Endothelial cell of umbilical vein (primary cell): ENCODE measurements at regions of chr7 and their contacts with region 1.

Region 1: DNA sequence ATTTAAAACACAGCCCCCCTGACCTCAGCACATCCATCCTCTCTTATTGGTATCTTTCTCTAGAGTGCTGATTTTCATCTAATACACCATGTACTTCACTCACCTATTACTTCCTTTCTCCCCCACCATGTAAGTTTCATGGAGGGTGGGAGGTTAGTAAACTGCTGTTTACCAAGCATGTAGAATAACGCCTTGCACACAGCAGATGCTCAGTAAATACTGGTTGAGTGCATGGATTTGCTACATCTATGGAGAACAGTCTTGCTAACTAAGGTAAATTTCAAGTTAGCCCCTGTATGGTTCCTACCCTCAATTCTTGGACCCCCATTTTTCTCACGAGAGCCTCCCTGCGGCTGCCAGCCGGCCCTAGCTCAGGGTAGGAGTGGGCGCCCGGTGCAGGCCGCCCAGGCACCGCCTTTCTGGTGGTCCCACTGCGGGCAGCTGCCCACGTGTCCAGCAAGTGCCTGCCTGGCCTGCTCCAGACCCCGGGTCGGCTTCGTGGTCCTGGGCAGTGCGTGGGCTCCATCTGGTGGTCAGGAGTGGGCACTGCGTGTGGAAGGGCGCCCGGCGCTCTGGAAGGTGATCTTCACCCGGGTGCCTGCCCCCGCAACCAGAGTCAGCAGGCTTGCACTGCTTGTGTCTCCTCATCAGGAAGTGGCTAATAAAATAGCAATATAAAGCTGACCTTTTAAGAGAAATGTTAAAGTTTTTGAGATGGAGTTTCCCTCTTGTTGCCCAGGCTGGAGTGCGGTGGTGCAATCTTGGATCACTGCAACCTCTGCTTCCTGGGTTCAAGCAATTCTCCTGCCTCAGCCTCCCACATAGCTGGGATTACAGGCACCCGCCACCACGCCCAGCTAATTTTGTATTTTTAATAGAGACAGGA is 63.4 kb upstream of the DNAJB6 start:
- DNase-seq: peak; percentile 76
- H3K4me3 ChIP-seq: no peak overlapping the region
- H3K27ac ChIP-seq: no peak overlapping the region
- H3K4me1 ChIP-seq: peaks cover 14% of the 10 kb centered on the region
- H3K27me3 ChIP-seq: no peaks in the 10 kb centered on the region
- CTCF ChIP-seq: peak; percentile 95 to 99
- POLR2A ChIP-seq: no peak

Region 2: GRCh38 chr7:155796381-155797261 is 1476.8 kb before region 1 on chr7:
- CTCF ChIA-PET with region 1: no interaction called
- POLR2A ChIA-PET with region 1: no interaction called
- dilution Hi-C with region 1: no loop called
- intact Hi-C with region 1: loop called (anchors 5 kb)
- DNase-seq: no peak
- H3K4me3 ChIP-seq: no peak overlapping the region
- H3K27ac ChIP-seq: no peak overlapping the region
- H3K4me1 ChIP-seq: no peaks in the 10 kb centered on the region
- H3K27me3 ChIP-seq: peaks cover 6 to 11% of the 10 kb centered on the region in 2 experiments
- CTCF ChIP-seq: peak; percentile 63 to 97
- POLR2A ChIP-seq: no peak

Region 3: DNA sequence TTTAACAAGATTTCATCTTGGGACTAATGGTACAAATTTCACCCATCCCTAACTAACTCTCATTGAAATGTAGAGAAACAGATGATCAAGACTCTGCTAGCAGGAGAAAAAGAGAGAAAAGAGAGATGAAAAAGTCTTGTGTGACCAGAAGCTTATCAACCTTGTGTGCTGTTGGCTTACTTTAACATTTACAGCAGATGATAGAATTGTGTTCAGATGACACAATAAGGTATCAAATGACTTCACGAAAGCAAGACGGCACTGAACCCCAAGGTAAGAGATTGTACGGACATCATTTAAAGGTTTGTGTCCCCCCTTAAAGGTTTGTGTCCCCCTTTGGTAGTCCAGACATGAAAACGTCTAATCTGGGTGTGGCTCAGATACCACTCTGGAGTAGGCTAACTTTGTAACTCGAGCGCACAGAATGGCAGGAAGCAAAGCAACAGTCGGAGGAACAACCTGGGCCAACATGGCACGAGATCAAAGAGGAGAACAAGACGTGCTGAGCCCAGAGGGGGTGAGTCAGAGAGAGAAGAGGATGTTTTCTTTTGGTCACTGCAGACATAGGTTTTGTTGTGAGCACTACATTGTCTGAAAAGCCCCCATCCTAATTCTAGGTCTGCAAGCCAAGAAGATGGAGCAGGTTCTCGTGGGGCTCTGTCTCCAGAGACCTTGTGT is 370.1 kb before region 1 on chr7:
- CTCF ChIA-PET with region 1: no interaction called
- POLR2A ChIA-PET with region 1: no interaction called
- dilution Hi-C with region 1: no loop called
- intact Hi-C with region 1: loop called (anchors 2 kb)
- DNase-seq: peak; percentile 81
- H3K4me3 ChIP-seq: no peak overlapping the region
- H3K27ac ChIP-seq: peak overlapping the region; percentile 80
- H3K4me1 ChIP-seq: peaks cover 14% of the 10 kb centered on the region
- H3K27me3 ChIP-seq: no peaks in the 10 kb centered on the region
- CTCF ChIP-seq: no peak
- POLR2A ChIP-seq: peak; percentile 34

Region 4: DNA sequence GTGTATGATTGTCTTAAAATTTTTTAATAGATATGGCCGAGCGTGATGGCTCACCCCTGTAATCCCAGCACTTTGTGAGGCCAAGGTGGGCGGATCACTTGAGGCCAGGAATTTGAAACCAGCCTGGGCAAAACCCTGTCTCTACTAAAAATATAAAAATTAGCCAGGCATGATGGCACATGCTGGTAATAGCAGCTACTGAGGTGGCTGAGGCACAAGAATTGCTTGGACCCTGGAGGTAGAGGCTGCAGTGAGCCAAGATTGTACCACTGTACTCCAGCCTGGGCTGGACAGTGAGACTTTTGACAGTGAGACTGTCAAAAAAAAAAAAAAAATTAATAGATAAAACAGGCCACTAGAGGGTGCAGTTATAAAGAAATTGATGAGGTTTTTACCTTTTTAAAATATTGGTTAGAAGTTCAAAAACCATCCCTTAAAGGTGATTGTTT is 303.5 kb before region 1 on chr7:
- CTCF ChIA-PET with region 1: interaction called, 5 read pairs
- POLR2A ChIA-PET with region 1: no interaction called
- dilution Hi-C with region 1: no loop called
- intact Hi-C with region 1: loop called (anchors 1 kb)
- DNase-seq: peak; percentile 15
- H3K4me3 ChIP-seq: no peak overlapping the region
- H3K27ac ChIP-seq: no peak overlapping the region
- H3K4me1 ChIP-seq: no peaks in the 10 kb centered on the region
- H3K27me3 ChIP-seq: no peaks in the 10 kb centered on the region
- CTCF ChIP-seq: peak; percentile 20 to 22
- POLR2A ChIP-seq: no peak

Region 5: GRCh38 chr7:157228864-157229422 is 44.5 kb before region 1 on chr7:
- CTCF ChIA-PET with region 1: interaction called, 4 read pairs
- POLR2A ChIA-PET with region 1: no interaction called
- dilution Hi-C with region 1: no loop called
- intact Hi-C with region 1: loop called (anchors 1 kb)
- DNase-seq: peak; percentile 36
- H3K4me3 ChIP-seq: no peak overlapping the region
- H3K27ac ChIP-seq: no peak overlapping the region
- H3K4me1 ChIP-seq: no peaks in the 10 kb centered on the region
- H3K27me3 ChIP-seq: no peaks in the 10 kb centered on the region
- CTCF ChIP-seq: peak; percentile 28 to 50
- POLR2A ChIP-seq: no peak

Region 6: GRCh38 chr7:158164101-158165095 is 890.9 kb after region 1 on chr7:
- CTCF ChIA-PET with region 1: no interaction called
- POLR2A ChIA-PET with region 1: no interaction called
- dilution Hi-C with region 1: no loop called
- intact Hi-C with region 1: no loop called
- DNase-seq: no peak
- H3K4me3 ChIP-seq: no peak overlapping the region
- H3K27ac ChIP-seq: no peak overlapping the region
- H3K4me1 ChIP-seq: no peaks in the 10 kb centered on the region
- H3K27me3 ChIP-seq: no peaks in the 10 kb centered on the region
- CTCF ChIP-seq: no peak
- POLR2A ChIP-seq: no peak